ENCODE measurements at regions of chr11 and their contacts with region 1.

Region 1: GRCh38 chr11:125404776-125405435 is 91.2 kb downstream of the FEZ1 start:
- DNase-seq: peak; percentile 72 to 84 (median 77)
- H3K4me3 ChIP-seq: peak overlapping the region in 21 of 59 donors; percentile 5 to 35 (median 17)
- H3K27ac ChIP-seq: peak overlapping the region in 56 of 59 donors; percentile 12 to 87 (median 70)
- H3K27me3 ChIP-seq: no peaks in the 10 kb centered on the region
- CTCF ChIP-seq: peak; percentile 64 to 98 (median 91)

Region 2: GRCh38 chr11:125091247-125091876 is 313.5 kb before region 1 on chr11:
- intact Hi-C with region 1: loop called (anchors 5 kb)
- DNase-seq: peak in 3 of 10 donors; percentile 37 to 65 (median 50)
- H3K4me3 ChIP-seq: no peak overlapping the region
- H3K27ac ChIP-seq: peak overlapping the region in 6 of 59 donors; percentile 1 to 52 (median 17)
- H3K27me3 ChIP-seq: no peaks in the 10 kb centered on the region
- CTCF ChIP-seq: peak; percentile 48 to 86 (median 70)

Region 3: GRCh38 chr11:125351033-125351867 is 53.7 kb before region 1 on chr11:
- intact Hi-C with region 1: loop called in 1 of 2 experiments (anchors 5 kb)
- DNase-seq: peak in 1 of 10 donors; percentile 41
- H3K4me3 ChIP-seq: peak overlapping the region in 5 of 59 donors; percentile 12 to 34 (median 22)
- H3K27ac ChIP-seq: peak overlapping the region in 39 of 59 donors; percentile 0 to 83 (median 60)
- H3K27me3 ChIP-seq: no peaks in the 10 kb centered on the region
- CTCF ChIP-seq: no peak

Region 4: GRCh38 chr11:126115816-126116331 is 711.0 kb after region 1 on chr11:
- intact Hi-C with region 1: no loop called
- DNase-seq: peak in 2 of 10 donors; percentile 18 to 44
- H3K4me3 ChIP-seq: no peak overlapping the region
- H3K27ac ChIP-seq: no peak overlapping the region
- H3K27me3 ChIP-seq: peaks cover 0 to 4% (median 0%) of the 10 kb centered on the region in 45 donors
- CTCF ChIP-seq: peak in 16 of 56 donors; percentile 10 to 33 (median 22)

Measured in dorsolateral prefrontal cortex (tissue), 120 donors.